AG04450 (cell line): ENCODE measurements at regions of chr1 and their contacts with region 1.

Region 1: DNA sequence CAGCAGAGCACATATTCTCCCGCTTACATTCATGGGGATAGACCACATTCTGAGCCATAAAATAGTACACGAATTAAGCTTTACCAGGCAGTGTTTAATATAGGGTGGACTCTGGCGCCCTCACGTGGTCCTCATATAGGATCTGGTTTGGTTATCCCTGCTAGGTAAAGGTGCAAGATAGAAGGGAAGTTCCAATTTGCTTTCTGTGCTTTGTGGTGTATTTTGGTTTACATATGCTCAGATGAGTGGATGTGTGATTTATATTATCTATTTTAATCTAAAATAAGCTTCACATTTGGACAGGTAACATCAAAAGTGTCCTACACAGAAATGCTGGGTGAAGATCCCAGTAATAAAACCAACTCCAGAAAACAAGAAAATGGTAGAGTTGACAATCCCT is 3.6 kb downstream of the CR1 start:
- DNase-seq: peak; percentile 10
- H3K4me3 ChIP-seq: no peak overlapping the region
- H3K27ac ChIP-seq: no peak overlapping the region
- H3K27me3 ChIP-seq: peaks cover 16% of the 10 kb centered on the region
- CTCF ChIP-seq: peak; percentile 76

Region 2: GRCh38 chr1:207049974-207050391 is 449.6 kb before region 1 on chr1:
- CTCF ChIA-PET with region 1: interaction called, 10 read pairs
- POLR2A ChIA-PET with region 1: no interaction called
- DNase-seq: no peak
- H3K4me3 ChIP-seq: peak overlapping the region; percentile 75
- H3K27ac ChIP-seq: peak overlapping the region; percentile 79
- H3K27me3 ChIP-seq: peaks cover 7% of the 10 kb centered on the region
- CTCF ChIP-seq: peak; percentile 86

Region 3: GRCh38 chr1:207084701-207085180 is 414.8 kb before region 1 on chr1:
- CTCF ChIA-PET with region 1: interaction called, 14 read pairs
- POLR2A ChIA-PET with region 1: no interaction called
- DNase-seq: peak; percentile 8
- H3K4me3 ChIP-seq: no peak overlapping the region
- H3K27ac ChIP-seq: no peak overlapping the region
- H3K27me3 ChIP-seq: peaks cover 8% of the 10 kb centered on the region
- CTCF ChIP-seq: peak; percentile 61

Region 4: DNA sequence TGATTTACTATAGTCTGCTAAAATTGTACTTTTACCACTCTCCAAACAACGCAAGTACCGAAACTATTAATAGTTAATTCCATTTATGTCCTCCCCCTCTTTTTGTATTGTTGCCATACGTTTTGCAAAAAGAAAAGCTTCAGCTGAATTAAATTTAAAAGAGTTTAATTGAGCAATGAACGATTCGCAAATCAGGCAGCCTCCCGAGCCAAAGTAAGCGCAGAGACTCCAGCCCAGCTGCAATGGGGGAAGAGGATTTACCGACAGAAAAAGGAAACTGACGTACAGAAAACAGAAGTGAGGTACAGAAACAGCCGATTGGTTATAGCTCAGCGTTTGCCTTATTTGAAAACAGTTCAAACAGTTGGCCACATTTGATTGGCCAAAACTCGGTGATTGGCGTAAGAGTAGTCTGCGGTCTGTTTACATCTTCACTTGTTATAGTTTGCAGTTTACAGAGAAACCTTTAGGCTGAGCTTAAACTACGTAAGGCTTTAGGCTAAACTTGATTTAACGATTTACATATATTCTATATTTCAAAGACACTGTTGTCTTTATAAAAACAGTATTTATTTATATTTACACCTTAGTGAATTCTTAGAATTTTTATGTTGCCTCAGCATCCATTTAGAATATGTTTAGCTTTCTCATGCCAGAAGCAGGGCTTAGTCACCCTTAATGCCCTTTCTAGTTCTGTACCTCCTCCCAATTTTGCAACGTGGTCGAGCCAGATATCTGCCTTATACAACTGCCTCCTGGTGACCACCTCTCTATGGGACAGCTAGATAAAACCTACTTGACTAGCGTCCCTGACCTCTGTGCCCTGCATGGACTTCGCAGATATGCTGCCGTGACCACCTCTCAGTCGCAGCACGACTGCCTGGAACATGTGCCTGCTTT is 20.2 kb after region 1 on chr1:
- CTCF ChIA-PET with region 1: interaction called, 18 read pairs
- POLR2A ChIA-PET with region 1: no interaction called
- DNase-seq: no peak
- H3K4me3 ChIP-seq: no peak overlapping the region
- H3K27ac ChIP-seq: no peak overlapping the region
- H3K27me3 ChIP-seq: no peaks in the 10 kb centered on the region
- CTCF ChIP-seq: no peak